PC-3 (cell line): ENCODE measurements at regions of chr9 and their contacts with region 1.

Region 1: DNA sequence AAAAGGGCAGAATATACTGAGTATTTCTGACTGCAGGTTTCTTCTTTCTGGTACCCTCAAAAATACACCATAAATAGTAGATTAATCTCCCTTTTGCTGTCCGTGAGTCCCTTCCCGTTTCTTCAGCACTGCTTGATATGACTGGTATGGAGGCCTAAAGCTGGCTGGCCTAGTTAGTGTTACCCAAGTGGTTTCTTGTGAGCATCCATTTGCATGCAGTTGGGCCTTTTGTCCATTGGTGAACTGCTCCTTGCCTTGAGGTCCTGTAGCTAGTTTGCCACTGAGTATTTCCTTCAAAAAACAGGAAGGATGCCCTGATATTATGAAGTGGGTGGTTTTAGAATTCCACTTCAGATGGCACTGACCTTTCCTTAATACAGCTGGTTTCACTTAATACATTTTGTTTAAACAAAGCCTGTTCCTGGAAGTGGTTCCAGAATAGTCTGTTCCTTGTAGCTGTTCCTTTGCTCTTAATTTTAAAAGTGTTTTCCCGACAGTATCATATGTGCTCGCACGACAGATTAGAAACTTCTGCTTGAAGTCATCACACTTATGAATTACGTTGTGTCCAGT is 40.0 kb upstream of the ABL1 start:
- DNase-seq: no peak
- ATAC-seq: no peak
- H3K4me3 ChIP-seq: no peak overlapping the region
- H3K27ac ChIP-seq: no peak overlapping the region
- H3K4me1 ChIP-seq: no peaks in the 10 kb centered on the region
- H3K27me3 ChIP-seq: no peaks in the 10 kb centered on the region
- CTCF ChIP-seq: no peak

Region 2: DNA sequence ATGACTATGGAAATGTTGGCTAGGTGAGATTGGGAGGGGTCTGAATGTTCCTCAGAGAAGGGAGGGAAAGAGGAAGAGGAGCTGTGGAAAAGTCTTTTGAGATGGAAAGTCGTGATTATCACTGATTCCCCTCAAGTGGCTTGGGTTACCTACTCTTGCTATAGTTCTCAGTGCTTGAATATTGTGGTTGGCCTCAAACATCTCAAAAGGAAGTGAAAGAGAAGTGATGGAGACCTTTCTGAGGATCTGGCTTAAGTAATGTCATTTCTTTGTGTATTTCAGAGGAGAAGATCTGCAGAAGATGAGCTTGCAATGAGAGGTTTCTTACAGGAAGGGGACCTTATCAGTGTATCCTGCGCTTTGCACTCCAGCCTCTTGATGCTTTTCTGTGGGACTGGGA is 96.0 kb before region 1 on chr9:
- CTCF ChIA-PET with region 1: no interaction called
- POLR2A ChIA-PET with region 1: interaction called, 20 read pairs
- intact Hi-C with region 1: no loop called
- DNase-seq: no peak
- ATAC-seq: no peak
- H3K4me3 ChIP-seq: no peak overlapping the region
- H3K27ac ChIP-seq: no peak overlapping the region
- H3K4me1 ChIP-seq: peaks cover 9% of the 10 kb centered on the region
- H3K27me3 ChIP-seq: no peaks in the 10 kb centered on the region
- CTCF ChIP-seq: no peak